Calu3 (cell line): ENCODE measurements at regions of chr11 and their contacts with region 1.

Region 1: GRCh38 chr11:132941024-132941646 is 591.2 kb downstream of the OPCML start:
- DNase-seq: no peak
- H3K4me3 Mint-ChIP-seq: no peak overlapping the region
- H3K27ac Mint-ChIP-seq: no peak overlapping the region
- H3K4me1 Mint-ChIP-seq: no peaks in the 10 kb centered on the region
- H3K27me3 Mint-ChIP-seq: no peaks in the 10 kb centered on the region
- CTCF ChIP-seq: peak; percentile 73

Region 2: DNA sequence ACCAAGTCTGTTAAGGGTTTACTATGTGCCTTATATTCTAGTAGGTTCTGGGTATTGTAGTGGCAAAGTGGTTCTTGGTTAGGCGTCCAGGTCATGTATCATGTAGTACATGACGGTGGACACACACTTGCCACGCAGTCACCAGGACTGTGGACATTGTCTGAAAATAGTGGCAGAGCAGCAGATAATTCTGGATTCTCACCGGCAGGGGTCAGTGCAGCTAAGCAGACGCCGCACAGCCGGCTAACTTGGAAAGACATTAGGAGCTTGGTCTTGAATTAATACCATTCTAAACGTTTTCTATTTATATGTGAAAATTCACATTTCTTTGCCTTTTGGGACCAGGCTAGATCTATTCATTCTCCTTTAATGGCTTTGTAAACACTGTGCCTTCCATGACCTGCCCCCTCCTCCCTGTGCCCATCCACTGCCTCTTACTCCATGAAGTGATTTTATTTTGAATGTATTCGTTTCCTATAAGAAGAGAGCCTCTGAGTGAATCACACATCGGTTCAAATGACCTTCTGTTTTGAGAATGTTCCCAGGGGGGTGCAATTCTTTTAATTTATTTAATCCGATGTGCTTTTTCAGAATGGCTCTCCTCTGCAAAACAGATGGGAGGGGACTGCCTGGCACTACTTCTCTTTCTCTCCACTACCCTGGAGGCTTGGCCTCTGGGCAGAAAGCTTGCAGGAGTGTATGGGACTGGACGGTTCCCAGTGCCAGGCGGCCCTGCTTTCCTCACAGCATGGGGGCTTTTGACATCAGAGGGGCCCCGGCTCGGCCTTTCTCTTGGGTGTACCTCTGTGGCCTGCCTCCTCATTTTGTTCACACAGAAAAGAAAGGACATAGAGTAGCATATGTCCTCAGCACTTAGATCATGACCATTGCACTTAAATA is 1192.7 kb before region 1 on chr11:
- CTCF ChIA-PET with region 1: interaction called, 3 read pairs
- intact Hi-C with region 1: loop called (anchors 5 kb)
- DNase-seq: peak; percentile 10
- H3K4me3 Mint-ChIP-seq: no peak overlapping the region
- H3K27ac Mint-ChIP-seq: no peak overlapping the region
- H3K4me1 Mint-ChIP-seq: no peaks in the 10 kb centered on the region
- H3K27me3 Mint-ChIP-seq: no peaks in the 10 kb centered on the region
- CTCF ChIP-seq: no peak

Region 3: DNA sequence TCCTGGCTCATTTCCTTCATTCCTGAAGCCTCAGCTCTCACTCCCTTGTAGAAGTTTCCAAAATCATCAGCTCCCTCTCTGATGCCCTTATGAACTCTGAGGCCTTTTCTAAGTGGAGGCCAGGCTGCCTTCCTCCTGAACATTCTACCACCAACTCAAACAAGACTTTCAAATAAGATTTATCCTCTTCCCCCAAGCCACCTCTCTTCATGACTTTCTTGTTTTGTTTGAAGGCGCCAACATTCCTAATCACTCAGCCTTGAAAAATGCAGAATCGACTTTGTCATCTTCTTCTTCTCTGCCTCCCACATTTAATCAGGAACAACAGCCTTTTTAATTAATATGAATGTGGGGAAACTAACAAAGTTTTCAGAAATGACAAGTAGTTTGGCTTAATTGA is 336.7 kb before region 1 on chr11:
- CTCF ChIA-PET with region 1: no interaction called
- intact Hi-C with region 1: no loop called
- DNase-seq: no peak
- H3K4me3 Mint-ChIP-seq: no peak overlapping the region
- H3K27ac Mint-ChIP-seq: no peak overlapping the region
- H3K4me1 Mint-ChIP-seq: no peaks in the 10 kb centered on the region
- H3K27me3 Mint-ChIP-seq: no peaks in the 10 kb centered on the region
- CTCF ChIP-seq: no peak